ENCODE measurements at regions of chr5 and their contacts with region 1.

Region 1: GRCh38 chr5:73081093-73081492 is 39.3 kb upstream of the TMEM171 start:
- DNase-seq: no peak
- H3K4me3 Mint-ChIP-seq: no peak overlapping the region
- H3K27ac Mint-ChIP-seq: no peak overlapping the region
- H3K4me1 Mint-ChIP-seq: no peaks in the 10 kb centered on the region
- H3K27me3 Mint-ChIP-seq: no peaks in the 10 kb centered on the region
- CTCF ChIP-seq: no peak

Region 2: GRCh38 chr5:73031839-73032238 is 49.3 kb before region 1 on chr5:
- CTCF ChIA-PET with region 1: no interaction called
- intact Hi-C with region 1: no loop called
- DNase-seq: peak; percentile 81
- H3K4me3 Mint-ChIP-seq: peak overlapping the region; percentile 20
- H3K27ac Mint-ChIP-seq: peak overlapping the region; percentile 47
- H3K4me1 Mint-ChIP-seq: peaks cover 40% of the 10 kb centered on the region
- H3K27me3 Mint-ChIP-seq: no peaks in the 10 kb centered on the region
- CTCF ChIP-seq: no peak

Region 3: GRCh38 chr5:73115399-73116051 is 34.4 kb after region 1 on chr5:
- CTCF ChIA-PET with region 1: interaction called, 6 read pairs
- intact Hi-C with region 1: loop called (anchors 5 kb)
- DNase-seq: no peak
- H3K4me3 Mint-ChIP-seq: no peak overlapping the region
- H3K27ac Mint-ChIP-seq: no peak overlapping the region
- H3K4me1 Mint-ChIP-seq: peaks cover 76% of the 10 kb centered on the region
- H3K27me3 Mint-ChIP-seq: no peaks in the 10 kb centered on the region
- CTCF ChIP-seq: no peak

Region 4: DNA sequence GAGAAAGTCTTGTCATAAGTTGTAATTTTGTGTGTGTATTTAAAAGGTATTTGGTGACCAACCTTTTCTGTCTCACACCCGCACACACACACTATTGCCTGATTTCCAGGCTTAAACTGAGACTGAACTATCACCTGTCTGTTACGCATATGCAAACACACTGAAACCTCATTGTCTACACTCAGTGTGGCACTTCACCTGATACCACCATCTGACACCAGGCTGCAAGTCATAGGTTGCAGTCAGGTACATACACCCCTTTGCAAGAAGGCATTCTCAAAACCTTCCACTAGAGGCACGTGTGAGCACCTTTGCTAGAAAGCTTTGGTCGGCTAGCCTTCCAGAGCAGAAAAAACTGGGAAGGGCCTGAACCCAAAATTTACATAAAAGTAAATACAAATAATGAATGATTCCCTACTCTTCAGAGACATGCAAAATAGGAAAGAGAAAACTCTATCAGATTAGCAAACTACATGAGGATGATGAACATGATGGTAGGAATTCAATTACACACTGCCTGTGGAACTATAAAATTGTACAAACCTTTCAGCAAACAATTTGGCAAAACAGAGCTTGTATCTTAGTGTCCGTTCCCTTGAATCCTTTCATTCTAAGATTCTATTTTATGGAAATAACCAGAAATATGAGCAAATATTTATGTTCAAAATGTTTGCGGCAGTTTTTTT is 373.4 kb after region 1 on chr5:
- CTCF ChIA-PET with region 1: no interaction called
- intact Hi-C with region 1: loop called (anchors 5 kb)
- DNase-seq: peak; percentile 83
- H3K4me3 Mint-ChIP-seq: no peak overlapping the region
- H3K27ac Mint-ChIP-seq: no peak overlapping the region
- H3K4me1 Mint-ChIP-seq: peaks cover 10% of the 10 kb centered on the region
- H3K27me3 Mint-ChIP-seq: peaks cover 43% of the 10 kb centered on the region
- CTCF ChIP-seq: peak; percentile 58

Measured in Calu3 (cell line).